T-cell (primary cell): ENCODE measurements at regions of chr7 and their contacts with region 1.

Region 1: DNA sequence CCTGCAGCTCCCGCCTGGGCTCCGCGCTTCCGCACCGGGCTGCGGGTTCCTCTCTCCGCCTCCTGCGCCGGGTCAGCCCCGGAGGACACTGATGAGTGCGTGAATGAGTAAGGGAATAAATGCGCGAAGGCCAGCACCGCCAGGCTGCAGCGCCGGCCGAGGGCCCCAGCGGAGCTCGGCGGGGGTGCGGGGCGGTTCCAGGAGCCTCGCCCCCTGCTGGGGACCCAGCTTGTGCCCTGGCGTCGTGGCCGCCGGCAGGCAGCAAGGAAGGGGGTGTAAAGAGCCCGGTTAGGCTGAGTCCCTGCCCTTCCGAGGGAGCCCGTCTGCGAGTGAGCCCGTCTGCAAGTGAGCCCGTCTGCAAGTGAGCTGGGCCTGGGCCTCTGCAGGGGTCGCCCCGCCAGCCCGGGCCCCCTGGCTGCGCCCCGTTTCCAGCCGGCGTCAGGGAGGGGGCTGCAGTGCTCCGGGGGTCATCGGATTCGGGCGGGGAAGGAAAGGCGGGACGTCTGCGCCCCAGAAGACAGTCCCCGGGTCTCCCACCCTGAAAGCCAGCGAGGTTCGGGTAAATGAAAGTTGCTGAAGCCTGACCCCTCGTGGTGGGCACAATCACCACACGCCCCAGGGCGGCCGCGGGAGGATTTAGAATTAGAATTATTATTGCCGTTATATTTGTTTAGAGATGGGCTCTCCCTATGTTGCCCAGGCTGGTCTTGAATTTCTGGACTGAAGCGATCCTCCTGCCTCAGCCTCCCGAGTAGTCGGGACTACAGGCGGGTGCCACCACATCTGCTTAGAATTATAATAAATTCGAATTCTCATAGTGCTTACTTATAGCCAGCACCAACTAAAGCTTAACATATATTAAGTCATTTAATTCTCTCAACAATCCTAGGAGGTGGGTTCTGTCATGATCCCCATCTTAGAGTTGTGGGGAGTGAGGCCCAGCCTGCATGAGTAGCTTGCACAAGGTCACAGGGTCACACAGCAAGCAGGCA is 8.6 kb upstream of the CRYGN start:
- DNase-seq: peak; percentile 51 to 85 (median 74)
- ATAC-seq: peak; percentile 87 to 91 (median 90)
- H3K4me3 ChIP-seq: peak overlapping the region; percentile 56 to 71
- H3K4me3 Mint-ChIP-seq: peak overlapping the region; percentile 67 to 72 (median 69)
- H3K27ac ChIP-seq: no peak overlapping the region
- H3K27ac Mint-ChIP-seq: peak overlapping the region in 1 of 2 donors; percentile 61
- H3K4me1 ChIP-seq: peaks cover 0 to 27% of the 10 kb centered on the region in 2 experiments
- H3K4me1 Mint-ChIP-seq: peaks cover 4 to 19% (median 8%) of the 10 kb centered on the region in 3 donors
- H3K27me3 ChIP-seq: peaks cover 0 to 22% of the 10 kb centered on the region in 2 experiments
- H3K27me3 Mint-ChIP-seq: peaks cover 0 to 2% of the 10 kb centered on the region in 2 donors

Region 2: DNA sequence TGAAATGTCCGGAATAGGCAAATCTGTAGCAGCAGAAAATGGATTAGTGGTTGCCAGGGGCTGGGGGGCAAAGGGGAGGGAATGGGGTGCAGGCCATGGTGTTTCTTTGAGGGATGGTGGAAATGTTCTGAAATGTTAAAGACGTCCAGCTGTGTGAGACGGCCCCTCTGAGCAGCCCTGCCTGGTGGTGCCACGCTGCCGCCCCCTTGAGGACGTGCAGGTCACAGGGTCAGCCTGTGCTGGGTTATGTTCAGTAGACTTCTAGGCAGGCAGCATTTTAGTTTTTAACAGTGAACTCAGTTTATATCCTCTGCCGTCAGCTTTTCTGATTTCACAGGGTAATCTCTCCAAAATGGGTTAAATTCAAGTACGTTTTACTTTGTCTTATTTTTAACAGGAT is 97.5 kb before region 1 on chr7:
- CTCF ChIA-PET with region 1: interaction called, 9 to 17 read pairs
- POLR2A ChIA-PET with region 1: interaction called in 1 of 2 experiments, 7 read pairs
- DNase-seq: peak in 3 of 35 experiments; percentile 20 to 44 (median 26)
- ATAC-seq: no peak
- H3K4me3 ChIP-seq: no peak overlapping the region
- H3K4me3 Mint-ChIP-seq: peak overlapping the region; percentile 17 to 78 (median 60)
- H3K27ac ChIP-seq: peak overlapping the region; percentile 98
- H3K27ac Mint-ChIP-seq: peak overlapping the region; percentile 86 to 91
- H3K4me1 ChIP-seq: peaks cover 28 to 37% of the 10 kb centered on the region in 2 experiments
- H3K4me1 Mint-ChIP-seq: peaks cover 56 to 65% (median 61%) of the 10 kb centered on the region in 3 donors
- H3K27me3 ChIP-seq: no peaks in the 10 kb centered on the region
- H3K27me3 Mint-ChIP-seq: no peaks in the 10 kb centered on the region

Region 3: GRCh38 chr7:151368136-151368571 is 80.4 kb before region 1 on chr7:
- CTCF ChIA-PET with region 1: interaction called, 19 to 21 read pairs
- POLR2A ChIA-PET with region 1: interaction called in 1 of 2 experiments, 3 read pairs
- DNase-seq: peak; percentile 33 to 87 (median 63)
- ATAC-seq: peak; percentile 96 to 98 (median 97)
- H3K4me3 ChIP-seq: no peak overlapping the region
- H3K4me3 Mint-ChIP-seq: peak overlapping the region in 1 of 3 donors; percentile 22
- H3K27ac ChIP-seq: no peak overlapping the region
- H3K27ac Mint-ChIP-seq: peak overlapping the region in 1 of 2 donors; percentile 16
- H3K4me1 ChIP-seq: peaks cover 2 to 8% of the 10 kb centered on the region in 2 experiments
- H3K4me1 Mint-ChIP-seq: peaks cover 13 to 19% (median 13%) of the 10 kb centered on the region in 3 donors
- H3K27me3 ChIP-seq: no peaks in the 10 kb centered on the region
- H3K27me3 Mint-ChIP-seq: no peaks in the 10 kb centered on the region

Region 4: GRCh38 chr7:151429548-151430331 is 18.8 kb before region 1 on chr7:
- CTCF ChIA-PET with region 1: interaction called, 5 to 13 read pairs
- POLR2A ChIA-PET with region 1: no interaction called
- DNase-seq: peak; percentile 43 to 84 (median 67)
- ATAC-seq: peak; percentile 72 to 82 (median 80)
- H3K4me3 ChIP-seq: no peak overlapping the region
- H3K4me3 Mint-ChIP-seq: peak overlapping the region; percentile 59 to 70 (median 61)
- H3K27ac ChIP-seq: peak overlapping the region; percentile 82
- H3K27ac Mint-ChIP-seq: peak overlapping the region; percentile 92 to 94
- H3K4me1 ChIP-seq: peaks cover 42 to 78% of the 10 kb centered on the region in 2 experiments
- H3K4me1 Mint-ChIP-seq: peaks cover 52 to 67% (median 65%) of the 10 kb centered on the region in 3 donors
- H3K27me3 ChIP-seq: peaks cover 0 to 6% of the 10 kb centered on the region in 2 experiments
- H3K27me3 Mint-ChIP-seq: no peaks in the 10 kb centered on the region

Region 5: DNA sequence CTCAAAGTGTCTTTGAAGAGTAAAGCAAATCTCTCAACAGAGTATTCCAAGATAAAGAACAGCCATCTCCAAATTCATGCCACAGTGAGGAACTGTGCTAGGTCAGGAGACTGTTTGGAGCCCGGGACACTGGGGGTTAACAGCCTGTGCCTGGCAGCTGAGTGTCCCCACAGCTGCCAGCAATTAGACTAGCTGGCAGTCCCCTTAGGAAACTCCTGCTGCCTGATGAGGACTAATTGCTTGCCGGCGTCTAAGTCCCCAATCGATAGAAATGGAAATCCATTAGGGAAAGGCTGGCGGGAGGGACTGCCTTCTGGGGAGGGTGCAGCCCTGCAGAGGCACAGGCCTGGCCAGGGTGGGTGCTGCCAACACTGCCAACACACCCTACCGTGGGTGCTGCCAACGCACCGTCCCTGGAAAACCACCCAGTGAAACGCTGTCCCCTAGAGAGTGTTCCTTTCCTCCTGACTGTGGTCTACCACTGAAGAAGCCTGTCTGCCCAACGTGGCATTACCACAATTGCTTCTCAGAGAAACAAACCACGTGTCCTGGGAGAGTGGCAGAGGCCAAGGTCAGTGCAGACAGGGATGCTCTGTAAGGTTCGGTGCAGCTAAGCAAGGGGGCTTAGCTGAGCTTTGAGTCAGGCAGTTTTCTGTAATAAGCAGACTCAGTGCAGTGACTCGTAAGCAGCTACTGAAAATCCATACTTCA is 1166.6 kb after region 1 on chr7:
- CTCF ChIA-PET with region 1: no interaction called
- POLR2A ChIA-PET with region 1: no interaction called
- DNase-seq: no peak
- ATAC-seq: no peak
- H3K4me3 ChIP-seq: no peak overlapping the region
- H3K4me3 Mint-ChIP-seq: no peak overlapping the region
- H3K27ac ChIP-seq: no peak overlapping the region
- H3K27ac Mint-ChIP-seq: no peak overlapping the region
- H3K4me1 ChIP-seq: no peaks in the 10 kb centered on the region
- H3K4me1 Mint-ChIP-seq: no peaks in the 10 kb centered on the region
- H3K27me3 ChIP-seq: peaks cover 0 to 7% of the 10 kb centered on the region in 2 experiments
- H3K27me3 Mint-ChIP-seq: no peaks in the 10 kb centered on the region